ENCODE measurements at regions of chr6 and their contacts with region 1.

Region 1: DNA sequence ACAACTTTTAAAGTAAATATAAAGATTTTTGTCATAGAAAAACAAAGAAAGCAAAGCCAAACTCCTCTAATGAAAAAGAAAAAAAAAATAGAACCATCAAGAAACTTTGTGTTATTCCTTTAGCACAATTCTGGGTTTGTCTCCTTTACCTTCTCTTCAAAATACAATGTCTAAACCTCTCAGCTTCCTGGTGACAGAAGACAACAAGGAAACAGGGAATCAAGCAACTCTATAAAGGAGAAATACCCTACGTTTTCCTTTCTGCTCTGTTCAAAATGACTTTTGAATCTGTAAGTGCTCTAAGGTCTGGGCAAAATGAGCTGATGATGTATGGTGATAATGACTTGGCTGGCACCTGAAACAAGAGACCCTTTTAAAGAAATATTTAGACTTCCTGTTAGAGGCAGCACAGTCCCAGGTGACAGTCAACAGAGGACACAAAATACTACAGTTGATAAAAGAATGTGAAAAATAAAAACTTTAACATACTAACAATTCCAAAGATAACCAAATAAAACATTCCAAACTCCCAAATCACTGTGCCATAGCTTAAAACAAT is 101.4 kb downstream of the PRDM1 start:
- DNase-seq: no peak
- H3K4me3 Mint-ChIP-seq: no peak overlapping the region
- H3K27ac Mint-ChIP-seq: peak overlapping the region; percentile 53
- H3K4me1 Mint-ChIP-seq: peaks cover 70% of the 10 kb centered on the region
- H3K27me3 Mint-ChIP-seq: no peaks in the 10 kb centered on the region

Region 2: GRCh38 chr6:105459049-105459448 is 728.5 kb before region 1 on chr6:
- CTCF ChIA-PET with region 1: no interaction called
- POLR2A ChIA-PET with region 1: no interaction called
- intact Hi-C with region 1: loop called (anchors 1 kb)
- DNase-seq: peak; percentile 71
- H3K4me3 Mint-ChIP-seq: peak overlapping the region; percentile 36
- H3K27ac Mint-ChIP-seq: peak overlapping the region; percentile 80
- H3K4me1 Mint-ChIP-seq: peaks cover 30% of the 10 kb centered on the region
- H3K27me3 Mint-ChIP-seq: peaks cover 20% of the 10 kb centered on the region

Region 3: DNA sequence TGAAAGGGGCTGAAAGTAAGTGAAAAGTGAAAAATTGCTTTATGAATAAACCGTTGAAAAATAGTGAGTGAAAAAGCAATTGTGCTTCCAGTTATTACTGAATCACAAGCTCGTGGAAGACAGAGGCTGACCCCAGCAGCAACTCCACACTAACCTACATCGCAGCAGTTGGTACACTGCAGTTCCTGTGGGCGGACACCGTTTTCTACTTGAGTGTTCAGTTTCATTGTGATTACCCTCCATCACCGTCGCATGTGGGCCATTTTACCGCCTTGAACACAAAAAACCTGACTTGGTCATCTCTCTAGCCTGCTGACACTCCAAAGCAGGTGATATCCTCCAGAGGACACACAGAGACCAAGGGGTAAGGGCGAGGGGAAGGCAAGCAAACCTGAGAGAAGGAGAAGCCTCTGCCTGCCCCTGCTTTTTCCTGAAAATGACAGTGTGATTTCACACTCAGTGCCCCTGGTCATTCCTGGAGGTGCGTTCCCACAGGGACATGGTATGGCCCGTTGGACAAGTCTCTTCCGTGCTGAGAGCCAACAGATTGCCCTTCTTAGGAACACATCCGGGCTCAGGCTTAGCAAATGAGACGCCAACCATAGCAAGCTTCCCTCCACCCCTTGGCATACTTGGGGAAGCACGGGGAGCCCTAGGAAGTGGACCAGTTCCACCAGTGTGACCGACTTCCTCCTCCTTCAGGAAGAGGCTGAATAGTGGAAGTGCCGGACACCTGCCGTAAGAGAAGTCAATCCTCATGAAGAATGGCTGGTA is 72.8 kb before region 1 on chr6:
- CTCF ChIA-PET with region 1: interaction called, 6 read pairs
- POLR2A ChIA-PET with region 1: interaction called, 20 read pairs
- intact Hi-C with region 1: loop called (anchors 1 kb)
- DNase-seq: peak; percentile 92
- H3K4me3 Mint-ChIP-seq: peak overlapping the region; percentile 25
- H3K27ac Mint-ChIP-seq: peak overlapping the region; percentile 75
- H3K4me1 Mint-ChIP-seq: peaks cover 92% of the 10 kb centered on the region
- H3K27me3 Mint-ChIP-seq: peaks cover 8% of the 10 kb centered on the region

Region 4: DNA sequence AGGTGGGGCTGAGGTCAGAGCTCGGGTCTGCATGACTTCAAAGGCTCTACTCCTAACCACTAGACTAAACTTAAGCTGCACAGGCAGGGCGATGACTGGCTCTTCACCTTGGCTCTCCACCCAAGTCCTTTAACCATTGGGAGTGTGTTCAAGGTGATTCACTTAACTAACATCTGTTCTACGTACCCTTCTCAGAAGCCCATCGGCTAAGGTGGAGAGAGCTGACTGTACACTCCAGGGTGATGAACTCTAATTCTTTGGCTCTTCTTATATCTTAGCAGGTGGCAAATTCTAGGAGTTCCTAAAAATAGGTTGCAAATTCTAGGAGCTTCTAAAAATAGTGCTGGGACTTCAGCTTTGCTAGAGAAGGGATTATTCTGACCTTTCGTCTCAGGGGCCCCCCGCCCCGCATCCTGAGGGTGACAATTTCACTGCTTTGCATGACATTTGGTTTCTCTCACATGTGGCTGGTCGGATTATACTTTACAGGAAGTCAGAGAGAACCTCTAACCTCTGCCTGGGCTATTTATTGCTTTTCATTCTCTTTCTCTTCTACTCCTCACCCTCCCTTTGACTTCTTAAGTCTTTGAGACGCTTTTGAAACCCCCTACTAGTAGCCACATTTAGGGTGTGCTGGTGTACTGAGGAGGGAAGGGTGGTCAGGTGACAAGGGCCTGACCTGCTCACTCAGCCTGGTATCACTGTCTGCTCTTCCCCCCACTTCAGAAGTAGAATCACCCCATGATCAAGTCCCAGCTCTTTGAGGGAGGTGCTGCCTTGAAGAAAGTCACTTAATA is 45.9 kb before region 1 on chr6:
- CTCF ChIA-PET with region 1: no interaction called
- POLR2A ChIA-PET with region 1: interaction called, 5 read pairs
- intact Hi-C with region 1: loop called (anchors 2 kb)
- DNase-seq: peak; percentile 80
- H3K4me3 Mint-ChIP-seq: peak overlapping the region; percentile 10
- H3K27ac Mint-ChIP-seq: peak overlapping the region; percentile 83
- H3K4me1 Mint-ChIP-seq: peaks cover 49% of the 10 kb centered on the region
- H3K27me3 Mint-ChIP-seq: no peaks in the 10 kb centered on the region

Region 5: DNA sequence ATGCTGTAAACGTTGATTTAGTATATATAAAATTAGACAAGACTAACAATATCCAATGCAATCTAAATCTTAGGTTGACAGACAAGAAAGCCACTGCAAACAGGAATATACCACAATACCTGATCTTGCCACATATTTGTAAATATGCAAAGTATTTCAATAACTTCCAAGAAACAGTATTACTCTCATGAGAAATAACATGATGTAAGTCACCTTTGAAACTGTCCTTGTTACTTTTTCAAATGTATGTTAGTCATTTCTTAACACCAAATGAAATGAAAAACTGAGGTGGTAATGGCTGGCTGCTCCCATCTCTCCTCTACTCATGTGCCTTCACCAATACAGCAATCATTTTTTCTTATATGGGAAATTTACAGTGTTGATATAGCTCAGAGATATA is 19.4 kb after region 1 on chr6:
- CTCF ChIA-PET with region 1: no interaction called
- POLR2A ChIA-PET with region 1: no interaction called
- intact Hi-C with region 1: loop called (anchors 2 kb)
- DNase-seq: no peak
- H3K4me3 Mint-ChIP-seq: no peak overlapping the region
- H3K27ac Mint-ChIP-seq: no peak overlapping the region
- H3K4me1 Mint-ChIP-seq: peaks cover 20% of the 10 kb centered on the region
- H3K27me3 Mint-ChIP-seq: no peaks in the 10 kb centered on the region

Region 6: DNA sequence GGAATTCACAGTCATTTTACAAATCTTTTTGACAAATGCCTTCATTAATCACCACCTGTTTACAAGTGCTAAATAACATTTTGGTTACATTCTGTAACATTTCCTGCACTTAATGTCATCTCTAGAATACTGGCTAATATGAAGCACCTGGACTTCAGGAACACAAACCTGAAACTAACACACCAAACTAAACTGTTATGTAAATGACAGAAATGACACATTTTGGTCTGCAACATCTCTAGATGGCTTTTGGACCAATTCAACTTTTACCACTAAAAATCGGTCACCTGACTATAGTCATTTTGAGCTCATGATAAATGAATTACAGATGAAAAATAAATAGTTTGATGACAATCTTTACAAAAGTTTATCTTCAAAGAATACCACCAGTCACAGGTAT is 57.4 kb after region 1 on chr6:
- CTCF ChIA-PET with region 1: no interaction called
- POLR2A ChIA-PET with region 1: no interaction called
- intact Hi-C with region 1: loop called (anchors 2 kb)
- DNase-seq: no peak
- H3K4me3 Mint-ChIP-seq: no peak overlapping the region
- H3K27ac Mint-ChIP-seq: no peak overlapping the region
- H3K4me1 Mint-ChIP-seq: peaks cover 29% of the 10 kb centered on the region
- H3K27me3 Mint-ChIP-seq: no peaks in the 10 kb centered on the region